Left cardiac atrium (tissue), 4 donors: ENCODE measurements at regions of chr9 and their contacts with region 1.

Region 1: GRCh38 chr9:131125128-131126058 is at the start of gene NUP214:
- DNase-seq: peak; percentile 99
- ATAC-seq: peak; percentile 100
- total RNA-seq, gene NUP214: 29.0 to 30.8 TPM

Region 2: GRCh38 chr9:131068076-131068816 is 57.1 kb before region 1 on chr9:
- intact Hi-C with region 1: loop called in 1 of 2 experiments (anchors 5 kb)
- DNase-seq: no peak
- ATAC-seq: peak; percentile 42

Region 3: GRCh38 chr9:131815971-131816873 is 690.8 kb after region 1 on chr9:
- intact Hi-C with region 1: no loop called
- DNase-seq: no peak
- ATAC-seq: no peak